ENCODE measurements at regions of chr11 and their contacts with region 1.

Region 1: DNA sequence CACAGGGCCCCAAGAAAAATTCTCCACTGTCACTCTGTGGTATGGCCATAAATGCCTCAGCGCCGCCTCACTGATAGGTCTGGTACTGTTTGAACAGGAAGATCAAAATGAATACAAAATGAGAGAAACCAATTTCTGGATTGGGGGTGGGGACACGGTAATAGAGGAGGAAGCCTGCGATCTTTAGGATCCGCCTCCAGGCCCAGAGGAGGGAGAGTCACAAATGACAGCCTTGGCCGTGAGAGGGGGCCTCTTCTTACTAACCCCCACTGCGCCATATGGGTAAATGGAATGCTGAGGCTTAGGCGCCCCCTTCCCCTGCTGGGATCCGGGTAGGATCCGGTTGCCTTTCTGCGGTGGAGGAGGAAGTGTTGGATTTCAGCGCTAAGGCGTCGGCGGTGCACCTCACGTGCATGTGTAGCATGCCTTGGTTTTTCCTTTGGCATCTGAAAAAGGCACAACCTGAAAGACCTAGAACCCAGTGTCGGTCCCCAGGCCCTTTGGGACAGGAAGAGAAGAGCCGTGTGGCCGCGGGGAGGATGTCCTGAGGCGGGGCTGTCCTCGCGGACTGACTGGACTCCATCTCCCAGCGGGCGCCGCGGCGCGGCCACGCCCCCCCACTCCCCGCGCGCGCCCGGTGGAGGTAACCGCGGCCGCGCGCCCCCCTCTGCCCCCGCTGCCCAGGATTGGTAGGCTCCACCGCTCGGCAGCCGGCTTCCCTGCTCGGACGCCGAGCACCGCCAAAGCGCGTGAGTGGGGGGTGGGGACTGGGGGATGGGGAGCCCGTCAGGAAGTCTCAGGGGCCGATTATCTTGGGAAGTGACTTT is 718 bp upstream of the MADD start:
- DNase-seq: peak; percentile 91 to 95 (median 94)
- ATAC-seq: peak; percentile 70 to 92 (median 90)
- H3K4me3 ChIP-seq: peak overlapping the region; percentile 44 to 95 (median 84)
- H3K27ac ChIP-seq: peak overlapping the region; percentile 92 to 99 (median 98)
- H3K4me1 ChIP-seq: peaks cover 0 to 58% (median 40%) of the 10 kb centered on the region in 12 donors
- H3K27me3 ChIP-seq: no peaks in the 10 kb centered on the region
- CTCF ChIP-seq: peak in 3 of 12 donors; percentile 18 to 32 (median 31)
- POLR2A ChIP-seq: peak in 1 of 2 donors; percentile 0

Region 2: GRCh38 chr11:47285969-47286770 is 17.0 kb after region 1 on chr11:
- intact Hi-C with region 1: no loop called
- DNase-seq: no peak
- ATAC-seq: peak; percentile 18 to 70 (median 36)
- H3K4me3 ChIP-seq: no peak overlapping the region
- H3K27ac ChIP-seq: peak overlapping the region in 9 of 12 donors; percentile 26 to 85 (median 54)
- H3K4me1 ChIP-seq: peaks cover 0 to 39% (median 6%) of the 10 kb centered on the region in 12 donors
- H3K27me3 ChIP-seq: no peaks in the 10 kb centered on the region
- CTCF ChIP-seq: no peak
- POLR2A ChIP-seq: no peak

Region 3: DNA sequence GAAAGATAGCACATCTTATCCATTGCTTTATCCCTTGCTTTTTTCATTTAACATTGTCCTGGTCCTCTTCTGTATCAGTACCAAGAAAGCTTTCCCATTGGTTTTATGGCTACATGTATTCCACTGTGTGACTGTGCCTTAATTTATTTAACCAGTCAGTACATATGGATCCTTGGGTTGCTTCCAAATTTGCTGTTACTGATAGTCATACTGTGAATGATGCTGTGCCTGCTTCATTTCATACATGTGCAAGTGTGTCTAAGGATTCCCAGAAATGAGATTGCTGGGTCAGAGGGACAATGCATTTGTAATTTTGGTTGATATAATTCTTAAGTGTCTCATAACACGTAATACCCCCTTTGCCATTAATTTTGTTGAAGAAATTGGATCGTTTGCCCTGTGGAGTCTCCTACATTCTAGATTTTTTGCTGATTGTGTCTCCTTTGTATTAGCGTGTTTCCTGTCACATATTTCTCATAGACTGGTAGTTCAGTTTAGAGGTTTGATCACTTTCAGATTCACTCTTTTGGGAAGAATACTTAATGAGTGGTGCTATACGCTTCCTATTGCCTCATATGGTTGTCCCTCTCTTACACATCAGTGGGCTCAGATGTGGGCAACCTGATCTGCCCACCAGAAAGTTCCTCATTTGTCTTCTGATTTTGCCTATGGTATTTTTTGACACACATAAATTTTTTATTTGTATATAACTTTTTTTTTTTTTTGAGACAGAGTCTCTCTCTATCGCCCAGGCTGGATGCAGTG is 48.0 kb after region 1 on chr11:
- intact Hi-C with region 1: loop called in 3 of 10 experiments (anchors 5 to 10 kb)
- DNase-seq: no peak
- ATAC-seq: no peak
- H3K4me3 ChIP-seq: no peak overlapping the region
- H3K27ac ChIP-seq: no peak overlapping the region
- H3K4me1 ChIP-seq: peaks cover 0 to 3% (median 0%) of the 10 kb centered on the region in 12 donors
- H3K27me3 ChIP-seq: no peaks in the 10 kb centered on the region
- CTCF ChIP-seq: no peak
- POLR2A ChIP-seq: no peak

Region 4: DNA sequence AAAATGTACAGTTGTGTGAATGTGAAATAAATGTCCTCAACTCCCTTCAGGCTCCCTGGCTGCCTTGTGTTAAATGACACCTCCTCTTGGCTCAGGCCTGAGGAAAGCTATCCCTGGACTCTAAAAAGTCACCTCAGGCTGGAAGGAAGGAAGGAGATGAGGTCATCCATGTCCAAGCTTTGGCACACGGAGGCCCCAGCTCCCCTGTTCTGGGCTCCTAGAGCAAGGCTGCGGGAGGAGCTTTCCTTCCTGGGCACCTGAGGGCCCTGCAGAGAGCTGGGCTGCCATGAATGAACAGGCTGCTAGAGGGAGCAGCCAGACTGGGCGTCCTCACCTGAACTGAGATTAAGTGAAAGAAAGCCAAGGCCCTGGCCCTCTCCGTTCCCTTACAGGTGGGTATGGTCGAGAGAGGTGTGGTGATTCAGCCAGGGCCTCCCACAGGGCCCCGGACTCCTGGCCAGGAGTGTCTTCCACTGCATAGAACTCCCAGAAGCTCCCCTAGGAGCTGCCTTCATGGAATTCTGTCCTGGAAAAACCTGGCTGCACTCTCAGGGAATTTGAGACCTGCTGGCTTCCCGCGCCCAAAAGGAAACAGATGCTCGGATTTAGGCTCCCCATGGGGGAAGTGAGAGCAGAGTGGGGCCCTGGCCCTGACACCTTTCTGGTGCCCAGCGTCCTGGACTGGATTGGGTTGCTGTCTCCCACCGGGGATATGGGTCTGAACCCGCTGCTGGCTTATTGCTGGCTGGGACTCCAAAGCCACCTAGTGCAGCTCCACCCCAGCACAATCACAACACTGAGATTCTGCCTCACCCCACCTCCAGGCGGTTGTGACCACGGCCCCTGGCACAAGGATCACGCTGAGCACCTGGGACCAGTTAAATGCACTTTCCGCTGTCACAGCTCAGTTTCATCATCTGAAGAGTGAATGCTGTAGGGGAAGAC is 61.0 kb after region 1 on chr11:
- intact Hi-C with region 1: loop called in 3 of 10 experiments (anchors 5 to 10 kb)
- DNase-seq: peak in 4 of 5 donors; percentile 48 to 71 (median 54)
- ATAC-seq: peak; percentile 23 to 40 (median 34)
- H3K4me3 ChIP-seq: no peak overlapping the region
- H3K27ac ChIP-seq: peak overlapping the region; percentile 43 to 83 (median 68)
- H3K4me1 ChIP-seq: peaks cover 0 to 76% (median 39%) of the 10 kb centered on the region in 12 donors
- H3K27me3 ChIP-seq: no peaks in the 10 kb centered on the region
- CTCF ChIP-seq: peak in 1 of 12 donors; percentile 19
- POLR2A ChIP-seq: no peak

Region 5: DNA sequence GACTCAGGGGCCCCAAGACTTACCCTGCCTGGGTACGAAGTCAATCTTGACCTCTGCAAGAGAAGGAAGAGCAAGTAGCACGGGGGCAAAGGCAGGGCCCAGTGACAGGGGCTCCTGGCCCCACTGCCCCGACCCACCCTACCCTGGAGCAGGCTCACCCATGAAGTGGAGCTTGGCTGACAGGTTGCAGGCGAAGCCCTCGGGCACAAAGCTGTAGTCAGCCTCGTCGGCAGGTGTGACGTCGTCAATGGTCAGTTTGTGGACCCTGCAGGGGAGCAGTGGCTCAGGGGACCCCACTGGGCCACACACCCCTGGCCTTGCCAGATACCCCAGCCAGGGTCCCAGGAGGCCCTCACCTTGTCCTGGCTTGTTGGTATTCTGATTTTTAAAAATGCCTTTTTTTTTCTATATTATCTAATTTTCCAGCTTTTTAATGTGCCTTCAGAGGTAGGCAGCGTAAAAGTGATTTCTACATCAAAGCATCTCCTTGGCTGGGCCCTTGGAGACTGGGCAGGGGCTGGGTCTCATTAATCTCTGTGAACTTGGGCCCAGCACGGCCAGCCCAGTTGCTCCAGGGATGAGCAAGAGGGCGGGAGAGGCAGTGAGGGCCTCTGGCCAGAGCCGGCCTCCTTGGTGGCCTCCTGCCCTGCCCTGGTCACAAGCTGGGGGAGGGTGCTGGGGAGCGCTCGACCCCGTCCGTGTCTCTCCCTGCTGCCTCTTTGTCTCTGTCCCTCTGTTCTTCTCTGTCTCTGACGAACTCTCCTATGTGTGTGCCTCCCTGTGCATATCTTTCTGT is 72.0 kb after region 1 on chr11:
- intact Hi-C with region 1: no loop called
- DNase-seq: peak in 4 of 5 donors; percentile 19 to 59 (median 38)
- ATAC-seq: peak in 3 of 4 donors; percentile 9 to 21 (median 16)
- H3K4me3 ChIP-seq: no peak overlapping the region
- H3K27ac ChIP-seq: peak overlapping the region in 6 of 12 donors; percentile 30 to 72 (median 48)
- H3K4me1 ChIP-seq: peaks cover 0 to 89% (median 6%) of the 10 kb centered on the region in 12 donors
- H3K27me3 ChIP-seq: no peaks in the 10 kb centered on the region
- CTCF ChIP-seq: no peak
- POLR2A ChIP-seq: no peak

Region 6: DNA sequence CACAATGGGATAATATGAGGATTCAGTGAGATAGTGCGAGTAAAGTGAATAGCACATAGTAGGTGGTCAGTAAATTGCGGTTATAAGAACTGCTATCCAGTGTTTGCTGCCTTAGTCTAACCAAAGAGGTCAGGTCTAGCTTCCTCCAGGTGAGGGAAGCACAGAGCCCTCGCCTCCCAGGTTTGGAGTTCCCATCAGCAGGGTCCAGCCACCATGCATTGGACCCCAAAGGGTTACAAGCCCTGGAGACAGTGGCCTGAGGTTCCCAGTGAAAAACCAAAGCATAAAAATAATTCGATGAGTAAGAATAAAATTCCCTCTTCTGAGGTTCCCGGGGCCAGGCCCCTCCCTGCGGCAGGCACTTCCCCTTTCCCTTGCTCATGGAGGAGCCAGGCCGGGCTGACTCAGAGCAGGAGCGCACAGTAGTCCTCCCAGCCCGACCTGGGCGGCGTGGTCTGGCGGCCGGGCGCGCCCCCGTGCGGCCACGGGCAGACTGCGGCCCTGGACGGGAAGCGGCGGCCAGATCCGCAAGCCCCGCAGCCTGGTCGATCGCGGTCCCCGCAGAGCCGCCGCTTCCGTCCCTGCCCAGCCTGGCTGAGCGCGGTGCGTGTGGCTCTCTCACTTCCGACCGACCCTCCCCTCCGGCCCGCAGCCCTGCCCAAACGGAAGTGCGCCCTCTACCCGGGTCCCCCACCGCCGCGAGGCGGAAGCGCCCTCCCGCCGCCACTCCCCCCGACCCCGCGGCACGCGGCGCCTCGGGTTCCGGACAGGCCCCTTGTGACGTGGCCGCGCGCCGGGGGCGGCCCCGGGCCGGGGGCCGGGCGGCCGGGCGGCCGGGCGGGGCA is 138.8 kb after region 1 on chr11 and contains the start of gene SLC39A13:
- intact Hi-C with region 1: loop called in 1 of 10 experiments (anchors 1 kb)
- DNase-seq: peak; percentile 95 to 98 (median 96)
- ATAC-seq: peak; percentile 80 to 92 (median 90)
- H3K4me3 ChIP-seq: peak within 1 kb of the TSS; percentile 48 to 91 (median 80)
- H3K27ac ChIP-seq: peak within 1 kb of the TSS; percentile 83 to 98 (median 93)
- H3K4me1 ChIP-seq: peaks cover 0 to 45% (median 28%) of the 10 kb centered on the region in 12 donors
- H3K27me3 ChIP-seq: no peaks in the 10 kb centered on the region
- CTCF ChIP-seq: peak; percentile 74 to 97 (median 86)
- POLR2A ChIP-seq: peak in 1 of 2 donors; percentile 96
- total RNA-seq, gene SLC39A13: 33.5 to 82.8 (median 45.3) TPM